GM10248 (cell line): ENCODE measurements at regions of chr12 and their contacts with region 1.

Region 1: GRCh38 chr12:48671231-48671856 is 10.7 kb downstream of the KANSL2 start:
- DNase-seq: no peak
- CTCF ChIP-seq: no peak

Region 2: DNA sequence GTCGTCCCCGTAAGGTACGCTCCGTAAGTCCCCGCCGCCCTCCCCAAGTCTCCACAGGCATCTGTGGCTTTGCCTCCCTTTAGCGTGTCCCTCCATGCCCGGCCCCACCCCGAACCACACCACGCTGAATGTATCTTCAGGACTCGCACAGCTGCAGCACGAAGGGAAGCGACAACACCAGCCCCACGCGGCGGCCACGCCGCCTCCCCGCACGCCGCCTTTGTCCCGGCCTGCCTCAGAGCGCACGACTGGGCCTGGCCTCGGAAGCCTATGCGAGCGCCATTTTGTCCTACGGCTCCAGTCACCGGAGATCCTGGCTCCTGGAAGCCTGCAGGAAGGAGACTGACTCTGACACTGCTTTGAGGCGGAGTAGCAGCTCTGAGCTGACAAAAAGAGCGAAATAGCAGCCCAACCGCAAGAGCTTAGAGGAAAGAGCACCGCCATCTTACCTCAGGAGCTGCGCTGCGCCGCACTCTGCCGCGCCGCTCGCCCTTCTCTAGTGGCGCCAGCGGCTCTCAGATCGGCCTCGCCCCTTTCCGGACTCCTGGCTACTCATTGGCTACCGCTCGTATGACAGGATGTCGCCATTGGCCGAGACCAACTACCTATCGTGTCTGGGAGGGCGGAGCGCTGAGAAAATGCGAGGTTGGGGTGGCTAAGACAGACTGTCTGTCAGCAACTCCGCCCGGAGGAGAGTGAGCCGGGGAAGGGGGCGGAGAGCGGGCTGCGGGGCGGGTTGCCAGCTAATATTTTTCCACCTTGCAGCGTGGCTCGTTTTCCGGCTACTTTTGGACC is 10.6 kb after region 1 on chr12 and contains the start of gene KANSL2:
- CTCF ChIA-PET with region 1: interaction called, 5 read pairs
- POLR2A ChIA-PET with region 1: interaction called, 16 read pairs
- DNase-seq: peak; percentile 99
- CTCF ChIP-seq: no peak